Activated T-helper 1 cell treated with anti-CD3 and anti-CD28 coated beads, Interleukin-12 subunit alpha, Interleukin-12 subunit beta, Interleukin-2, Interleukin-4 antibody, amounts not matched to agents 30 ng/mL and 10 ng/mL and 1 ng/mL, durations not matched to agents 14 hours and 24 hours and 36 hours (primary cell): ENCODE measurements at regions of chr7 and their contacts with region 1.

Region 1: DNA sequence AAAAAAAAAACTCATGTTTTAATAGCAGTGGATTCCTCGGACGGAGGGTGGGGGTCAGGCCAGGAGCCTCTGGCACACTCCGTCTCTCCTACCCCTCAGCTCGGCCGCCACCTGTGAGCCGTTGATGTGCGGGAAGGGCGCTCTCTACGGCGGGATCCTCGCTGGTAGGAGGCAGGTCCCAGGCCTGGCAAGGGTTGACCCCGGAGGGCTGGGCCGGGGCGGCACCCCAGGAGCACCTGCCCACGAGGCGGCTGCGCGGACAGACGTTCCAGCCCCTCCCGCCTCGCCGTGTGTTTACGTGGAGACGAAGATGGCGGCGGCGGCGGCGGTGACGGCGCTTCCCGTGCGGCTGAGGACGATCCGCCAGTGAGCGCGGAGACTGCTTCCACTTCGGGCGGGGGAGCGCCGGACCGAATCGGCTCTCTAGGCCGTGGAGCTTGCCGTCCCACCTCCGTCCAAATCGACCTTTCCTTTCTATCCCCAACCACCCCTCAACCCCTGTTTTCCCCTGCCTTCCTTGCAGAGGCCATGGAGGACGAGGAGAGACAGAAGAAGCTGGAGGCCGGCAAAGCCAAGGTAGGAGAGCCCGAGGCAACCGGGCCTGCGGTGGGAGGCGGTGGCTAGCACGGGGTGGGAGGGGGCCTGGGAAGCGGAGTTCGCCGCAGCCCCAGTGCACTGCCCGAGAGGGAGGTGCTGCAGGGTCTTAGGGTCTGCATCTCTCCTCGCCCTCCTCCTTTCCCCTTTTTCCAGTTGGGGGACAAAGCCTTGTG is at the start of gene AKAP9:
- DNase-seq: peak; percentile 87
- H3K4me3 Mint-ChIP-seq: peak within 1 kb of the TSS; percentile 88
- H3K27ac Mint-ChIP-seq: peak within 1 kb of the TSS; percentile 97
- H3K4me1 Mint-ChIP-seq: peaks cover 30% of the 10 kb centered on the region
- H3K27me3 Mint-ChIP-seq: peaks cover 11% of the 10 kb centered on the region
- total RNA-seq, gene AKAP9: 34.1 and 36.1 TPM in 2 replicates

Region 2: DNA sequence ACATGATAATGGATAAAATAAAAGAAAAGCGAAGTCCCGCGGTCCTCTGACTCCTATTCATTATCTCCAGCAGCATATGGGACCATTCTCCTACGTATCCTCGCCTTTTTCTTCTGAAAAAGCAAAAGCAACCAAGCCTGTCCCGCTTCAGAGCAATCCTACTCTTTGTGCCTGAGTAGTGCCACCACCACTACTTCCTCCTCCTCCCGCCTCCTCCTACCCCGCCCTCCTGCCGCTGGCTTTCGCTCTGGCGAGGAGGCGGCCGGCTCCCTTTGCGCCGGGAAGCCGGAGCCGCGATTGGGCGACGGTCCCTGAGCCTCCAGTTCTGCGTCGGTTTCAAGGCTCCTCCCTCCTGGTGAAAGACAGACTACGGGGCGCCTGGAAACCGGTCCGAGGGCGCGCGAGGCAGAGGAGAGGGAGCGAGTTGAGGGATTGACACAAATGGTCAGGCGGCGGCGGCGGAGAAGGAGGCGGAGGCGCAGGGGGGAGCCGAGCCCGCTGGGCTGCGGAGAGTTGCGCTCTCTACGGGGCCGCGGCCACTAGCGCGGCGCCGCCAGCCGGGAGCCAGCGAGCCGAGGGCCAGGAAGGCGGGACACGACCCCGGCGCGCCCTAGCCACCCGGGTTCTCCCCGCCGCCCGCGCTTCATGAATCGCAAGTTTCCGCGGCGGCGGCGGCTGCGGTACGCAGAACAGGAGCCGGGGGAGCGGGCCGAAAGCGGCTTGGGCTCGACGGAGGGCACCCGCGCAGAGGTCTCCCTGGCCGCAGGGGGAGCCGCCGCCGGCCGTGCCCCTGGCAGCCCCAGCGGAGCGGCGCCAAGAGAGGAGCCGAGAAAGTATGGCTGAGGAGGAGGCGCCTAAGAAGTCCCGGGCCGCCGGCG is 676.5 kb before region 1 on chr7 and contains the start of gene FZD1:
- intact Hi-C with region 1: loop called (anchors 5 kb)
- DNase-seq: peak; percentile 66
- H3K4me3 Mint-ChIP-seq: peak within 1 kb of the TSS; percentile 88
- H3K27ac Mint-ChIP-seq: peak within 1 kb of the TSS; percentile 74
- H3K4me1 Mint-ChIP-seq: no peaks in the 10 kb centered on the region
- H3K27me3 Mint-ChIP-seq: peaks cover 47% of the 10 kb centered on the region
- total RNA-seq, gene FZD1: 0.70 and 0.86 TPM in 2 replicates

Region 3: DNA sequence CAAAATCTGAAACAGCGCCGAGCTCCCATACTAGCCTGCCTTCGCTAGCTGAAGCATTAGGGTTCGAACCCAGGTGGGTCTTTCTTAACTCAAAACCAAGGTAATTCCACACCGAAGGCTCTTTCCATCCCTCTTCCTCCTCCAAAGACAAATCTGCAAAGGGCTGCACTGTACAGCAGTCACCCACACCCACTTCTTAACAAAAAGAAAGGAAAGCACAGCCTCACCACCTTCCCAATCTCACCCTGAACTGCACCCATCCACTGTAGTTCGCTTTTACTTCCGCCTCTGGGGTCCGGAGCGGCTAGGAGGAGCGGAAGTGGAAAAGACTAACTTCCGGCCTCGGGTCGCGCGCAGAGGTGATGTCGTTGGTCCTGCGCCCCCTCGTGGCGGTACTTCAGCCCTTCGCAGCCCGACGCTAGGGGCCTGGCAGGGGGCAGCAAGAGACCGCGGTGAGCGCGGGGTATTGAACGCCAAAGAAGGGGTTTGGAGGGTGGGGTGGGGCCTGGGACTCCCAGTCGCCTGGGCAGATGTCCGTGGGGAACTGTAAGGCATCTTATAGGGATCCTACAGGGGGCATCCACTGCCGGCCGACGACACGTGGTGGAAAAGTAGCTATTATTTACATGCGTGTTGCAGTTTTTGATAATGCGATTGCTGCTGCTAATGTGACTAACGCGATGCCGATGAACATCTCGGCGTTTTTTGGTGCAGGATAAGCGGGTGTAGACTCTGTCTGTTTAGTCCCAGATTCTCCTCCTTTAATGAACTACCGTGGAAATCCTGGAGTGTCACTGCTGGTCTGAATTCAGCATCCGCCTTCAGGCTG is 60.1 kb before region 1 on chr7 and contains the start of gene MTERF1:
- intact Hi-C with region 1: loop called (anchors 1 kb)
- DNase-seq: peak; percentile 85
- H3K4me3 Mint-ChIP-seq: peak within 1 kb of the TSS; percentile 99
- H3K27ac Mint-ChIP-seq: peak within 1 kb of the TSS; percentile 98
- H3K4me1 Mint-ChIP-seq: peaks cover 37% of the 10 kb centered on the region
- H3K27me3 Mint-ChIP-seq: peaks cover 2% of the 10 kb centered on the region
- total RNA-seq, gene MTERF1: 19.3 and 20.4 TPM in 2 replicates

Region 4: DNA sequence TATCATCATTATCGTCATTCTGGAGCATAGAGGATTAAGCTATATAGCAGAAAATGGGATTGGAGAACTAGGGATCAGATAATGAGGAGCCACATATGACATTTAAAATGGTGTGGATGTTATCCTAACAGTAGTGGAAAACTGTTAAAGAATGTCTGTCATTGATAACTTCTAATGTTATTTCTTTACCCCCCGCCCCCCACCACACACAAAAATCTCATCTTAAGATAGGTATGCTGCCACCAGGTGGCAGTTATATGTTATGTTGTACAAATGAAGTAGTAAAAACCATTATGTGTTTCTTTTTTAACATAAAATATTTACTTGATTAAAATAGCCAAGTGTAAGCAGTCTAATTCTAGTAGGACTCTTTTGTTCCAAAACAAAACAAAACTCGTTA is 12.9 kb after region 1 on chr7:
- intact Hi-C with region 1: loop called (anchors 1 kb)
- DNase-seq: no peak
- H3K4me3 Mint-ChIP-seq: no peak overlapping the region
- H3K27ac Mint-ChIP-seq: no peak overlapping the region
- H3K4me1 Mint-ChIP-seq: peaks cover 9% of the 10 kb centered on the region
- H3K27me3 Mint-ChIP-seq: no peaks in the 10 kb centered on the region

Region 5: DNA sequence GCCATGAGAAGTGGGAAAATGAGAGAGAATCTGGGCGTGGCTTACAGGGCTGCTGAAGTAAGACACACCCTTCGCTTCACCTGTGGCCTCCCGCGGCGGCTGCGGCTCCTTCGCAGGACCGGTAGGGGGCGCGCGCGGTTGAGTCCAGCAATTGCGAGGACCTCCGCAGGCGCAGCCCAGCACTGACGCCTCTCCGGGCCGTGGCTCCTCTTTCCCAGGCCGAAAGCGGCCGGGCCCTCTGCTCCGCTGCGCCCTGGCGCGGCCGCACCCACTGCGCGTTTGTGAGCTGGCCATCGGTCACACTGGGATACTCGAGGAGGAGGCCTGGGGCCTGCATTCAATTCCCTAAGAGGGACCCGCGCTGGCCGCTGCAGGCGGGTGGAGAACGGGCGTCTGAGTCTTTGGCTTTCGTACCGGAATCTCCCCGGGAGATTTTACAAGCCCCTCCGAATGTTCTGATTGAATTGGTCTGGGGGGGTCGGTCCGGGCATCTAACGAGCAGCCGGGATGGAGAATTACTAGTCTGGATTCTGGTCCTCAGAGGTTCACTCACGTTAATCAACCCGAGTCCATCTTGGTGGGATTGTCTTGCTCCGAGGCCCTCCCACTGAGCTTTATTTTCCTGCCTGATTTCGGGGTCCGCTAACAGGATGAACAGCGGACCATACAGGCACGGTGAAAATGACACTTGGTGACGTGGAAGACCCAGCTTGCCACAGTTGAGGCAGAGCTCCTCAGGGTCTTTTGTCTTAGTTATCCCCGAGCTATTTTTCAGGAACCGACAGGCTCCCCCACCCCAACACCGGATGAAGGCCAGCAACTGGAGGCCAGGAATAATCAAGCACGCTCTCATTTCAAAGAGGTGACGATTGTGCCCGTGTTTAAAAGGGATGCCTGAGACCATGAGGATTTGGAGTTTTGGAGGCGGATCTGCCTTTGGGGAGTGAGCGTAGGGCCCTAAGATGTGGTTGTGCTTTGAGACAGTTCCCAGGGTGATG is 238.5 kb after region 1 on chr7 and contains the start of gene LRRD1:
- intact Hi-C with region 1: loop called (anchors 2 kb)
- DNase-seq: peak; percentile 84
- H3K4me3 Mint-ChIP-seq: peak within 1 kb of the TSS; percentile 69
- H3K27ac Mint-ChIP-seq: no peak within 1 kb of the TSS
- H3K4me1 Mint-ChIP-seq: no peaks in the 10 kb centered on the region
- H3K27me3 Mint-ChIP-seq: peaks cover 15% of the 10 kb centered on the region
- total RNA-seq, gene LRRD1: not detected in 2 replicates

Region 6: GRCh38 chr7:92528188-92528957 is 587.6 kb after region 1 on chr7 and contains the starts of genes PEX1 and RBM48:
- intact Hi-C with region 1: loop called (anchors 5 kb)
- DNase-seq: peak; percentile 94
- H3K4me3 Mint-ChIP-seq: peak within 1 kb of the TSS; percentile 91
- H3K27ac Mint-ChIP-seq: peak within 1 kb of the TSS; percentile 94
- H3K4me1 Mint-ChIP-seq: peaks cover 24% of the 10 kb centered on the region
- H3K27me3 Mint-ChIP-seq: no peaks in the 10 kb centered on the region
- total RNA-seq, gene PEX1: 14.7 and 17.0 TPM in 2 replicates
- total RNA-seq, gene RBM48: 17.2 and 17.6 TPM in 2 replicates

Region 7: GRCh38 chr7:93147363-93147762 is 1206.6 kb after region 1 on chr7:
- intact Hi-C with region 1: loop called (anchors 5 kb)
- DNase-seq: peak; percentile 22
- H3K4me3 Mint-ChIP-seq: peak overlapping the region; percentile 93
- H3K27ac Mint-ChIP-seq: peak overlapping the region; percentile 87
- H3K4me1 Mint-ChIP-seq: peaks cover 68% of the 10 kb centered on the region
- H3K27me3 Mint-ChIP-seq: no peaks in the 10 kb centered on the region